Right cardiac atrium (tissue), 5 donors: ENCODE measurements at regions of chr22 and their contacts with region 1.

Region 1: DNA sequence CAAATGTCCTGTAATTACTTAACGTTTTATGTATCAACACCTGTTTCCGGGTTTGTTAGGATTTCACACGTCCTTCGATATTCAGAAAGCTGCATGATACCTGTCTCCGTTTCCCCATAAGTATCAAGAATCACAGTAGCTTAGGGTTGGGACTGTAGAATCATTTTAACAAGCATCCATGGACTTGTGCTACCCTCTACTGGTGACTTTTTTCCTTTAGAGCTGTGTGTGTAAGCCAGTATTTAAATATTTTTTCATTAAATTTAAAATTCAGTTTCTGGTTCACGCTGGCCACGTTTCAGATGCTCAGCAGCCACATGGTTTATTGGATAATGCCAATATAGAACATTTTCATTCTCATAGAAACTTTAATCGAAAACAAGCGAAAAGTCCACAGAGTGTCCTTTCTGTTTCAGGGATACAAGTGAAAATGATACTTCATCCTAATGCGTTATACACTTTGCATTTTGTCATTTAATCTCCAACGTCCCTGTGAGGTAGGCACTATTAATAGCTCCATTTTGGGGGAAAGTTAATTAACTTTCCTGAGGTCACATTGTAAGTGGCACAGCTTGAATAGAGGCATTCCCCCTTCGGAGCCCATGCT is 61.5 kb upstream of the SLC25A18 start:
- DNase-seq: no peak
- ATAC-seq: peak; percentile 87 to 88
- H3K4me3 ChIP-seq: no peak overlapping the region
- H3K27ac ChIP-seq: no peak overlapping the region
- H3K4me1 ChIP-seq: no peaks in the 10 kb centered on the region
- H3K27me3 ChIP-seq: no peaks in the 10 kb centered on the region

Region 2: DNA sequence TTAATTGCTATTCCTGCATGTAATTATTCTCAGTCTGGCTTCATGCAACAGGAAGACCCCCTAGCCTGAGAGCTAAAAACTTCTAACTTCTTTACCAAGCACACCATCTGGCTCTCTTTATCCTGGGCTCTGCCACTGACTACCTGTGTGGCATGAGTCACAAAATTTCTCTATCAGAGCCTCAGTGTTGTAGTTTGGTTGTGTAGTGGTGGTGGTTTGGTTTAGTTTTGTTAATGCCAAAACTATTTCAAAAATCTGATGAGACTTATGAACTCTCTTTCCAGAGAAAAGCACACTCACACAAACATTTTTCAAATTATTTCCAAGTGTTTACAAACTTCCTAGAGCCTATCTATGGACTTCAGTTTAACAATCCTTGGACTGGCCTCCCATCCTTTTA is 424.5 kb before region 1 on chr22:
- intact Hi-C with region 1: loop called (anchors 5 to 10 kb)
- DNase-seq: no peak
- ATAC-seq: no peak
- H3K4me3 ChIP-seq: no peak overlapping the region
- H3K27ac ChIP-seq: no peak overlapping the region
- H3K4me1 ChIP-seq: no peaks in the 10 kb centered on the region
- H3K27me3 ChIP-seq: no peaks in the 10 kb centered on the region

Region 3: GRCh38 chr22:17084554-17085276 is 417.1 kb before region 1 on chr22 and contains the start of gene IL17RA:
- intact Hi-C with region 1: loop called in 3 of 4 experiments (anchors 5 to 10 kb)
- DNase-seq: peak; percentile 91 to 97 (median 95)
- ATAC-seq: peak; percentile 99
- H3K4me3 ChIP-seq: peak within 1 kb of the TSS; percentile 80
- H3K27ac ChIP-seq: peak within 1 kb of the TSS; percentile 55
- H3K4me1 ChIP-seq: peaks cover 2% of the 10 kb centered on the region
- H3K27me3 ChIP-seq: no peaks in the 10 kb centered on the region
- total RNA-seq, gene IL17RA: 8.7 to 13.4 (median 12.6) TPM

Region 4: GRCh38 chr22:17171313-17172171 is 330.2 kb before region 1 on chr22:
- intact Hi-C with region 1: loop called in 1 of 4 experiments (anchors 10 kb)
- DNase-seq: peak; percentile 94 to 97 (median 96)
- ATAC-seq: peak; percentile 96
- H3K4me3 ChIP-seq: peak overlapping the region; percentile 66
- H3K27ac ChIP-seq: peak overlapping the region; percentile 83
- H3K4me1 ChIP-seq: no peaks in the 10 kb centered on the region
- H3K27me3 ChIP-seq: no peaks in the 10 kb centered on the region

Region 5: DNA sequence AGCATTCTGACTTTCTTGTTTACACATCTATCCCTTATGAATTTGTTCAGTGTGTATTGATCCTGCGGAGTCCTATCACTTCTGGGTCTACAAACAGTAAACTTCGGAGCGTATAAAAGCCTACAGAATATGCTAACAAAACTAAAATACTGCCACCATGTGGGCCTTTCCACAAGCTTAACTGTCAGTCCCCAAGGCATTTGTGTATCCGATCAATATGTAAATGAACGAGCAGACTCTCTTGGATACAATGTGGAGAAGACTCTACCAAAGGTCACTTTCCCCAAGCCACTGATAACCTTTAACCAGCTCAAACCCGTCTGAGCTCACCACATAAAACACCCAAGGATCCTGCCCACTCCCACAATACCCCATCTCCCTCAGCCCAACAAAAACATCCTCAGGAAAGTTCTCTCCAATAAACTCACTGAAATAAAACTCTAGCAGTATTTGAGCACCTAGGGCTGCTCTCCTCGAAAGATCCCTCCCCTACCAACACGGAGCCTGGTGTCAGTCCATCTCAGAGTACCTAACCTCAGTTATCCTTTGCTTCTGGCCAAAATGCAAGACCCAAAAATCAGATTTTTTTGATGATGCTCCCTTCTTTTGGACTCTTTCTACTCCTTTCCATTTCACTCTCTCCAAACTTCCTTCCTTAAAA is 300.4 kb before region 1 on chr22:
- intact Hi-C with region 1: loop called in 1 of 4 experiments (anchors 10 kb)
- DNase-seq: no peak
- ATAC-seq: no peak
- H3K4me3 ChIP-seq: no peak overlapping the region
- H3K27ac ChIP-seq: no peak overlapping the region
- H3K4me1 ChIP-seq: no peaks in the 10 kb centered on the region
- H3K27me3 ChIP-seq: no peaks in the 10 kb centered on the region

Region 6: DNA sequence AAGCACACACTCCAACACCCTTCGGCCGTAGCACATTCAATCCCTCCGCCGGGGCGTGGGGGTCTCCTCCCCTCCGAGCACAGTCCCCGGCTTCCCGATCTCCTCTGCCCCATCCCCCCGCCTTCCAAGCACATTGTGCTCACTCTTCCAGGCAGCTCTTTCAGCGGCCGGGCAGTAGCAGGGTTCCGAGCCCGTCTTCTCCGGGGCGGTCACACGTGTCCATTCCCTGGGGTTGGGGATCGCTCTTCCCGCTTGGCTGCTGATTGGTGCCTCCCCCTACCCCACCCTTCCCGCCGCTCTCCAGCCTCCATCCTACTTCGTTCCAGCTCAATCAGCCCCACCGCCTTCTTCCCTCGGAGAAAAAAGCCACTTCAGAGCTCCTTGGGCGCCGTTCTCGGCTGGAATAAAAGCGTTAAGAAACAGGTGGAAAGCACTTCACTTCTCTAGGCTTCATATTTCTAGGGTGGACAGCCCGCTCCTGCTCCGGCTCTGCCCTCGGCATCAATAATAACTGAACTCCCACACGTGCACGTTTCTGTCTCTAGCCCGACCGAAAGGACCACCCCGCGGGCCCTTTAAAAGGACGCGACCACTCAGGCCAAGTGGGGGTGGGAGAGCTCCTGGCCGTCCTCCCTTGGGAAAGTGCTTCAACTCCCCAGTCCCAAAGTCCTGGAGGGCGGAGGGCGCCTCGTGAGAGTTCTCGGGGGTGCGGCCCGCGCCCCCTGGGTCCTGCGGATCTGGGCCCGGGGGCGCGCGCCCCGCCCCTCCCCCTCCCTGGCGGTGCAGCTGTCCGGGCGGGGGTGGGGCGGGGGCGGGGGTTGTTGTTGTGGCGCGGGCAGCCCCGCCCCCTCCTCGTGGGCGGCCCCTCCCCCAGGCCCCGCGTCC is 133.0 kb before region 1 on chr22:
- intact Hi-C with region 1: loop called in 1 of 4 experiments (anchors 2 kb)
- DNase-seq: peak; percentile 58 to 83 (median 82)
- ATAC-seq: peak; percentile 82 to 84
- H3K4me3 ChIP-seq: peak overlapping the region; percentile 80
- H3K27ac ChIP-seq: peak overlapping the region; percentile 85
- H3K4me1 ChIP-seq: no peaks in the 10 kb centered on the region
- H3K27me3 ChIP-seq: no peaks in the 10 kb centered on the region

Region 7: DNA sequence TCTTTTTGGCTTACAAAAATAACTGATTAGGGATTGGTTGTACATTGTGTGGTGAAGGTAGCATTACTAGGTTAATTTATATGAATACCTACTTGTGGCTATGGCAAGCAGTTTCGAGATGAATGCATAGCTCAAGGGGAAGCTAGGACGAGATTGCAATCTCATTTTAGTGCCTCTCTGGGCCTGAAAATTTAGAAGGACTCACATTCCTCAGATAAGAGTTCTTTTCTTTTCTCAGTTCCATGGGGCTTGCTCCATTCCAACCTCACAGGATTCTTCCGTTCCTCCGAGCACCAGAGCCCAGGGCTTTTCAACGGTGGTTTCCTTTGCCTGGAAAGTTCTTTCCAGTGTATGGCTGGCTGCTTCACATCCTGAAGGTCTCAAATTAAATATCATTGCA is 50.5 kb before region 1 on chr22:
- intact Hi-C with region 1: no loop called
- DNase-seq: no peak
- ATAC-seq: no peak
- H3K4me3 ChIP-seq: no peak overlapping the region
- H3K27ac ChIP-seq: no peak overlapping the region
- H3K4me1 ChIP-seq: no peaks in the 10 kb centered on the region
- H3K27me3 ChIP-seq: no peaks in the 10 kb centered on the region